AG04449 (cell line): ENCODE measurements at regions of chr20 and their contacts with region 1.

Region 1: DNA sequence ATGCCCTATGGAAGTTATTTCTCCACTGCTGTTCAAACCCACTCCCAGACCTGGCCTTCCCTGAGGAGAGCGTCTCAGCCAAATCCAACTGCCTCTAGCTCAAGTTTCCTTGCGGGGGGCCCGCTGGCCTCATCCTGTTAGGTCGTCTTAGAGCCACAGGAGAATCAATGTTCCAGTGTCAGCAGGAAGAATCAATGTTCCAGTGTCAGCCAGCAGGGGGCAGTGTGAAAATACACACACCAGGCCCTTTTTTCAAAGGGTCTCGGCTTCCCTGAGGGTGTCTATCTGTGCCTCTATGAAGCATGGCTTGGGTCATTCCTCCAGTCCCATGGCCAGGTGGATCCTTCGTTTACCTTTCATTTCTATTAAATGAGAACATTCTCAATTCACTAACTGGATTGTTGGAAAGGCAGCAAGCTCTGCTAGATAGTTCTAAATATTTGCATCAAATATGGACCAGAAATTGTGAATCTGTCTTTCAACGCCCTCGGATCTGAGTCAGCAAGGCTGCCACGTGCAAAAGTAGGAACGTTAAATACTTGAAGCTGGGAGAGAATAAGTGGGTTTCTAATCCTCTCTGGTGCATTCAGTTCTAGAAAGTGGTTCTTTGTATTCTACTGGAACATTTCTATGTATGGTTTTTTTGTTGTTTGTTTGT is 19.2 kb downstream of the PRND start:
- DNase-seq: no peak
- H3K4me3 ChIP-seq: no peak overlapping the region
- CTCF ChIP-seq: peak; percentile 67

Region 2: DNA sequence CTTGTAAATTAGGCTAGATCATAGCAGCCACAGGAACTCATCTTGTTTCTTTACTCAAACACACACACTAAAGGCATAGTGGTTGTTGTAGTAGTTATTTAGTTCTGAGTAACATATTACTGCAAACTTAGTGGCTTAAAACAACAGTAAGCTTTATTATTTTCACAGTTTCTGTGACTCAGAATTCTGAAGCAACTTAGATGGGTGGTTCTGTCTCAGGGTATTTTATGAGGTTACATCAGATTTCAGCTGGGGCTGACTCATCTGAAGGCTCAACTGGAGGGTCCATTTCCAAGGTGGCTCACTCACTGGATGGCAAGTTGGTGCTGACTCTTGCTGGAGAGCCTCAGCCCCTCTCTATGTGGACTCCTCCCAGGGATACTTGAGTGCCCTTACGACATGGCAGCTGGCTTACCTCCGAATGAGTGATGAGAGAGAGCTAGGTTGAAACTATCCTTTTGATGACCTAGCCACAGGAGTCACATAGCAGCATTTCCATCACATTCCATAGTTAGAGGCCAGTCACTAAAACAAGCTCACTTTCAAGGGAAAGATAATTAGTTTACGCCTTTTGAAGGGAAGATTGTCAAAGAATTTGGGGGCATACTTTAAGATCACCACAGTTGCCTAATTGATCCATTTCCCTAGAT is 155.7 kb before region 1 on chr20:
- CTCF ChIA-PET with region 1: no interaction called
- POLR2A ChIA-PET with region 1: no interaction called
- DNase-seq: no peak
- H3K4me3 ChIP-seq: no peak overlapping the region
- CTCF ChIP-seq: no peak

Region 3: DNA sequence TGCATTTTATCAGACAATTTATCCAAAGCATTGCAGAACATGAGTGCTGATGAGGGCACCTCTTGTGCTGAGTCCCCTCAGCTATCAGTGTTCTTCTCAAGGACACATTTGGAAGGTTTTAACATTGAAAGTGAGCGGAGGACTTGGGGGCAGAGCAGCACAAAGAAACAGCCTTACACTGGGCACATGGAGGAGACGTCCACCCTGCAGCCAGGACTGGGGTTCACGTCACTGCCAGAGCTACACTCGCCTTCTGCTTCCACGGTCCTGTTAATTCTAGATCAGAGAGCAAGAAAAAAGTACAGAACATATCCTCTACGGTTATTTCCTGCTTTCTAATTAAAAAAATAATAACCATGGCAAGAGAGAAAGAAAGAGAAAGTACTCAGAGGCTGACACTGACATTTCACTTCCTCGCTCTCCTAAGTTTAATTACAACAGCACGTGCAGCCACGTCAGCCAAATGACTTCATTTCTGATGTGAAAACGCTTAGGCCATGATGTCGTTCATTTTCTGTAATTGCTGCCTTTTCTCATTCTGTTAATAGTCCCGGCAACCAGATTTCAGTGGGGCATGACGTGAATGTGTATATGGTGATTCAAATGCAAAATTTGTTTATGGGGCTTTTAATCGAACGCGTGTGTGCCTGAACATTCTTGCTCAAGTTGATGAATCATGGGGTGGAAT is 14.0 kb before region 1 on chr20:
- CTCF ChIA-PET with region 1: interaction called, 23 read pairs
- POLR2A ChIA-PET with region 1: interaction called, 3 read pairs
- DNase-seq: peak; percentile 9
- H3K4me3 ChIP-seq: peak overlapping the region; percentile 24; the same call in 1 of the 2 replicates
- CTCF ChIP-seq: no peak